ENCODE measurements at regions of chr17 and their contacts with region 1.

Region 1: GRCh38 chr17:62724398-62725146 is 83.5 kb downstream of the MARCHF10 start:
- DNase-seq: peak; percentile 44 to 79 (median 61)
- H3K4me3 ChIP-seq: peak overlapping the region; percentile 23
- H3K4me3 Mint-ChIP-seq: peak overlapping the region; percentile 44 to 89 (median 85)
- H3K27ac ChIP-seq: peak overlapping the region; percentile 60
- H3K27ac Mint-ChIP-seq: peak overlapping the region; percentile 94 to 100 (median 98)
- H3K4me1 ChIP-seq: peaks cover 23% of the 10 kb centered on the region
- H3K4me1 Mint-ChIP-seq: peaks cover 35 to 40% (median 37%) of the 10 kb centered on the region in 3 donors
- H3K27me3 ChIP-seq: no peaks in the 10 kb centered on the region
- H3K27me3 Mint-ChIP-seq: peaks cover 0 to 10% of the 10 kb centered on the region in 2 donors

Region 2: DNA sequence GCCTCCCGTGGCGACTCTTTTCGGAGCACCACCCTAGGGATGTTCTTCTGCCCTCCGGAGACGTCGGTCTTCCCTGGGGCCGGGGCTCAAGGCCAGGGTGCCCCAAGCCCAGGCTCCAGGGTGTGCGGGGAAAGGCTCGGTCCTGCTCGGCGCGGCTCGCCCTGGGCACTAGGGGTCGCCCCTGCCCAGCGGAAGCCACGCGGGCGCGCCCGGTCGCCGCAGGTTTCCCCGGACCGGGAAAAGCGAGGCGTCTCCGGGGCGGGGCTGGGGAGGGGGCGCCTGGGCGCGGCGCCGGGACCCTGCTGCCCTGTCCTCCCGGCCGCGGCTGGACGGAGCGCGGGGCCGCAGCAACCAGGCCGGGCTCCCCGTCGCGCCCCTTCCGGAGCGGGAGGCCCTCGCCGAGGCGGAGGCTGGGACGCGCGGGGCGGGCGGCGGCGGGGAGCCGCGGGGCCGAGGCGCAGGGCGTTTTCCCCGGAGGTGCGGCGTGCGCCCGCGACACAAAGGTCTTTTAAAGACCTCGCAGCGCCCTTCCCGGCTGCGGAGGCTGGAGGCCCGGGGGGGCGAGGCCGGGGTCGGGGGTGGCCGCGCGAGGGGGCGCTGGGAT is 20.7 kb before region 1 on chr17:
- CTCF ChIA-PET with region 1: interaction called, 12 read pairs
- POLR2A ChIA-PET with region 1: no interaction called
- DNase-seq: peak; percentile 58 to 76 (median 65)
- H3K4me3 ChIP-seq: peak overlapping the region; percentile 39
- H3K4me3 Mint-ChIP-seq: peak overlapping the region; percentile 32 to 88 (median 66)
- H3K27ac ChIP-seq: peak overlapping the region; percentile 16
- H3K27ac Mint-ChIP-seq: peak overlapping the region in 1 of 8 donors; percentile 38
- H3K4me1 ChIP-seq: peaks cover 6% of the 10 kb centered on the region
- H3K4me1 Mint-ChIP-seq: peaks cover 7 to 12% (median 8%) of the 10 kb centered on the region in 3 donors
- H3K27me3 ChIP-seq: peaks cover 3% of the 10 kb centered on the region
- H3K27me3 Mint-ChIP-seq: peaks cover 5 to 10% of the 10 kb centered on the region in 2 donors

Region 3: GRCh38 chr17:62968445-62968923 is 243.9 kb after region 1 on chr17:
- CTCF ChIA-PET with region 1: interaction called, 12 read pairs
- POLR2A ChIA-PET with region 1: interaction called, 5 read pairs
- DNase-seq: peak in 4 of 5 donors; percentile 21 to 73 (median 60)
- H3K4me3 ChIP-seq: no peak overlapping the region
- H3K4me3 Mint-ChIP-seq: peak overlapping the region; percentile 55 to 82 (median 71)
- H3K27ac ChIP-seq: no peak overlapping the region
- H3K27ac Mint-ChIP-seq: peak overlapping the region in 7 of 8 donors; percentile 4 to 91 (median 53)
- H3K4me1 ChIP-seq: peaks cover 22% of the 10 kb centered on the region
- H3K4me1 Mint-ChIP-seq: peaks cover 28 to 47% (median 34%) of the 10 kb centered on the region in 3 donors
- H3K27me3 ChIP-seq: no peaks in the 10 kb centered on the region
- H3K27me3 Mint-ChIP-seq: peaks cover 4 to 8% of the 10 kb centered on the region in 2 donors